ENCODE measurements at regions of chr5 and their contacts with region 1.

Region 1: GRCh38 chr5:118791926-118792734 is 196.2 kb downstream of the DTWD2 start:
- DNase-seq: peak; percentile 35
- H3K4me3 ChIP-seq: no peak overlapping the region
- H3K27ac ChIP-seq: no peak overlapping the region
- H3K4me1 ChIP-seq: no peaks in the 10 kb centered on the region
- H3K27me3 ChIP-seq: no peaks in the 10 kb centered on the region
- CTCF ChIP-seq: peak in 3 of 4 experiments; percentile 66 to 73 (median 66)
- POLR2A ChIP-seq: no peak

Region 2: DNA sequence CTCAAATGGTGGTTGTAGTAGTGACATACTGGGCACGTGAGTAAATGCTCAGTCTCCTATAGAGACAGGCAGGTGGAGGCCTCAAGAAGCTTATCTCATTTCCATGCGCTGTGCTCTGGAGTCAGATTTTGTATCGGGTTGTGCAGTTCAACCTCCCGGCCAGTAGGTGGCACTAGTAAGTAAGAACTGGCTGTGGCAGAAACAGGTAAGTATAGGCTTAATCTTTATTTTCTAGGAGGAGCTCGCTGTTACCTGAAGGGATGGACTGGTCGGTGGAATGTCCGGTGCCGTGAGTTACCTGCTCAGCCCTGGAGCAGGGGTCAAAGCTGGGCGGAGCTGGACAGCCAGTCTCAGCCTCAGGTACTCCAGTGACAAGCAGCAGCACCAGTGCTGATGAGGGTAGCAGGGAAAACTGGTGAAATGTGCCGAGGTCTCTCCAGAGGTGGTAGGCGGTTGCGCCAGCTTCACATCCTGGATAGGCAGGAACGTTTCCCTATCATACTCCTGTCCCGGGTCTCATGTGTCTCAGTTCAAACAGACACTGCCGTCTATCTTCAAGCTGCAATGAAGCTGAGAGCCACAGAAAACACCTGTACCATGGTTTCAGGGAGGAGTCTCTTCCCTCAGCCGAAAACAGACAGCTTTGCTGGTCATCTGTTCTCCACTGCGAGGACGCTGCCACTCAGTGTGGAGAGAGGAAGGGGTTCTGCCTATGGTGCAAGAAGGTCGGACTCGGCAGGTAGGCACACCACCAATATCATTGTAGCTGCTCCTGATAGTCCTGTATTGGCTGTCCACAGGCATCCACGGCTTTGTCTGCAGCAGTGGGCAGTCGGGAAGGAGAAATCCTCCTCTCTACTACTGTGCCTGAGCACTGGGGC is 1337.2 kb before region 1 on chr5:
- intact Hi-C with region 1: loop called (anchors 10 kb)
- DNase-seq: peak; percentile 25
- H3K4me3 ChIP-seq: peak overlapping the region in 1 of 2 donors; percentile 11
- H3K27ac ChIP-seq: no peak overlapping the region
- H3K4me1 ChIP-seq: no peaks in the 10 kb centered on the region
- H3K27me3 ChIP-seq: no peaks in the 10 kb centered on the region
- CTCF ChIP-seq: peak; percentile 51 to 80 (median 72)
- POLR2A ChIP-seq: no peak

Region 3: GRCh38 chr5:117590944-117591343 is 1201.2 kb before region 1 on chr5:
- intact Hi-C with region 1: loop called (anchors 5 kb)
- DNase-seq: no peak
- H3K4me3 ChIP-seq: no peak overlapping the region
- H3K27ac ChIP-seq: no peak overlapping the region
- H3K4me1 ChIP-seq: no peaks in the 10 kb centered on the region
- H3K27me3 ChIP-seq: no peaks in the 10 kb centered on the region
- CTCF ChIP-seq: peak in 1 of 4 experiments; percentile 34
- POLR2A ChIP-seq: no peak

Region 4: GRCh38 chr5:119418531-119419116 is 626.5 kb after region 1 on chr5:
- intact Hi-C with region 1: no loop called
- DNase-seq: peak; percentile 34
- H3K4me3 ChIP-seq: no peak overlapping the region
- H3K27ac ChIP-seq: no peak overlapping the region
- H3K4me1 ChIP-seq: peaks cover 9% of the 10 kb centered on the region
- H3K27me3 ChIP-seq: no peaks in the 10 kb centered on the region
- CTCF ChIP-seq: no peak
- POLR2A ChIP-seq: no peak

Measured in prostate gland (tissue), 2 donors.